ENCODE measurements at regions of chr6 and their contacts with region 1.

Region 1: GRCh38 chr6:135209803-135210202 is 28.7 kb downstream of the MYB start:
- DNase-seq: no peak
- H3K4me3 ChIP-seq: no peak overlapping the region
- H3K27ac ChIP-seq: no peak overlapping the region
- H3K4me1 ChIP-seq: no peaks in the 10 kb centered on the region
- H3K27me3 ChIP-seq: no peaks in the 10 kb centered on the region
- CTCF ChIP-seq: no peak

Region 2: DNA sequence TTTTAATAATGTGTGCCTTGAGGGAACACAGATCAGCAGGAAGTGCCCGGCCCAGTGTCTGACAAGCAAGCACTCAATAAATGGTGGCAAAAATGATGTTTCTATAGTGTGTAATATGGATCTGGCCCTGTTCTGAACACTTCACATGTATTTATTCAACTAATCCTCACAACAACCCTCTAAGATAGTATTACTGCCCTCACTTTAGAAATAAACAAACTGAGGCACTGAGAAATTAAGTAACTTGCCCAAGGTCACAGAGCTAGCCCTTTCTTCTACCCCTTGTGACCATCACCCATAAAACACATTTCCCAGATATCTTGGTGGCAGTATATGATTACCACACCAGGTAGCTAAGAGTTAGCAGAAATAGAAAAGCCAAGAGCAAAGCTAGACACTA is 1053.1 kb after region 1 on chr6:
- intact Hi-C with region 1: loop called (anchors 10 kb)
- DNase-seq: no peak
- H3K4me3 ChIP-seq: no peak overlapping the region
- H3K27ac ChIP-seq: no peak overlapping the region
- H3K4me1 ChIP-seq: no peaks in the 10 kb centered on the region
- H3K27me3 ChIP-seq: no peaks in the 10 kb centered on the region
- CTCF ChIP-seq: no peak